Calu3 (cell line): ENCODE measurements at regions of chr6 and their contacts with region 1.

Region 1: DNA sequence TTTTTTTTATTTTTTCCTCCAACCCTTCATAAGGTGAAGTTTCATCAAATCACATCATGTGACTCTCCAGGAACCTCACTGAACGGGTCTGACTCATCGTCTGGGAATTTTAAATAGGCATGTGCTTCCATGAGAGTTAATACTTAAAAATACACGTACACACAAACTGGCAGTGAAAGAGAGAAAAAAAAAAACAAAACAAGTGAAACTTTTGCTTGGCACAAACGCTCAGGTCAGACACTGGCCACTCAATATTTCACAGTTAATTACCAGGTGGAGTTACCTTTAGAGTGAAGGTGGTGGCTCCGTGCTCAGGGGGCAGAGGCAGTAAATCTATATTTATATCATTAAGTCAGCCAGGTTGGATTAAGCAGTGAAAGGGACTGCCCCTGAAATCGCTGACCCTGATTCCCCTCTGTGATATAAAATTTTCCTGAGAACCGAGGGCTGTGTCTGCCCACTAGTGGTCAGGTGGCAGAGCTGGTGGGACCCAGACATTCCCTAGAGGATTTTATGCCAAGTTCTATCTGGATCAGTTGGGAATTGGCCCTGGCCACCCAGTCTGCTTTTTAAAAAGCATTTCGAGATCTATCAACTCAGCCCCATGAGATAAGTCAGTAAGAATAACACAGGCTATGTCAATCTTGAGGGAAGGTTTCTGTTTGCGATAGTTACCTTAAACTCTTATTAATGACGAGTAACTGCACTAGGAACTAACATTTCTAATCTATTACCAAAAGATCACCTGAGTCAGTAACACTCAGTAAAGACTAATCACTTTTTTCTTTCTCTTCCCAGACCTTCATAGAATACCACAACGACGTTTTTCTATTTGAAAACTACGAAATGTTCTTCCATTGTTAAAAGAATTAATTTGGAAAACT is 259.1 kb downstream of the HDGFL1 start:
- DNase-seq: peak; percentile 88
- H3K4me3 Mint-ChIP-seq: peak overlapping the region; percentile 48
- H3K27ac Mint-ChIP-seq: peak overlapping the region; percentile 82
- H3K4me1 Mint-ChIP-seq: peaks cover 68% of the 10 kb centered on the region
- H3K27me3 Mint-ChIP-seq: no peaks in the 10 kb centered on the region
- CTCF ChIP-seq: peak; percentile 95

Region 2: DNA sequence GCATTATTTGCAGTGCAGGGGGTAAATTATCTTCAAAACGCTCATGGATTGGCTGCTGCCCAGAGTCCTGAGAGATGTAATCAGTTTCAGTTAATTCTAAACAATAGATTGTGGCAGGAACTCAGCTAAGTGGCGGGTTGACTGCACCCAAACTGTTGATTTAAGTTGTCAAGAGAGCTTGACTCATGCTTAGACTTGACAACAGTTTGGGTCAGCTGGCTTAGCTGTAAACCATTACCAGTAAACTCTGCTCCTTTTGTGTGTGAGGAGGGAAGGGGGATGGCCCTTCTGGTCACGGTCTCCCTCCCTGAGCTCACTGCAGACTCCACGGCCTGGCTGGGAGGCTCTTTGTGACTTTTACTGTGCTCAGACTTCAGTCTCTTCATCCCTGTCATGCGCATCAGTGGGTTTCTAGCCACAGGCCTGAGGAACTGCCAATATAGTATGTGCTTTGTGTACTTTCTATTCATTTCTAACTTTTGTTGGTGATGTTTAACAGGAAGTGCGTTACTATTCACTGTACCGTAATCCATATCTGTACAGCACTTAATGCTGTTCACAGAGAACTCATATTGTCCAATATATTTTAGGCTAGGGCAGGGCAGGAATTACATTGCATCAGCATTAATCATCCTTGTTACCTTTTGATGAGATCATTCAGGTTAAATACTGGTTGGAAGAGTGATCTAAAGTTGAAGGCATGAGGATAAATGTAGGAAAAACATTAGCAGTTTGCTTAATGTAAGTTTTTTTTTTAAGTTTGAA is 1805.9 kb before region 1 on chr6:
- CTCF ChIA-PET with region 1: no interaction called
- intact Hi-C with region 1: loop called (anchors 5 kb)
- DNase-seq: peak; percentile 91
- H3K4me3 Mint-ChIP-seq: peak overlapping the region; percentile 53
- H3K27ac Mint-ChIP-seq: peak overlapping the region; percentile 97
- H3K4me1 Mint-ChIP-seq: peaks cover 65% of the 10 kb centered on the region
- H3K27me3 Mint-ChIP-seq: no peaks in the 10 kb centered on the region
- CTCF ChIP-seq: no peak

Region 3: DNA sequence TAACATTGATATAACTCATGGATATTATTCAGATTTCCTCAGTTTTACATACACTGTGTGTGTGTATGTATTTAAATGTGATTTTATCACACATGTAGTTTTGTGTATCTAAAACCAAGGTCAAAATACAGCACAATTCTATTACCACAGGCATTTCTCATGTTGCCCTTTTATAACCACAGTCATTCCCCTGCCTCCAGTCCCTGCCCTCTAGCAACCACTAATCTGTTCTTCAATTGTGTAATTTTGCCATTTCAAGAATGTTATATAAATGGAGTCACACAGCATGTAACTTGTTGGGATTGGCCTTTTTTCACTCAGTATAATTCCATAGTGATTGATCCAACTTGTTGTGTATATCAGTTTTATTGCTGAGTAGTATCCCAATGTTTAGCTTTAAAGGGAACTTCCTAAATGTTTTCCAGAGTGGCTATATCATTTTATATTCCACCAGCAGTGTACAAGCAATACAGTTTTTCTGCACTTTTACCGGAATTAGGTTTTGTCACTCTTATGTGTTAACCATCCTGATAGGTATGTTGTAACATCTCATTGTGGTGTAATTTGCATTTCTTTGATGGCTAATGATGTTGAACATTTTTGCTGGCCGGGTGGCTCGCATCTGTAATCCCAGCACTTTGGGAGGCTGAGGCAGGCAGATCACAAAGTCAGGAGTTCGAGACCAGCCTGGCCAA is 896.6 kb before region 1 on chr6:
- CTCF ChIA-PET with region 1: no interaction called
- intact Hi-C with region 1: loop called (anchors 2 kb)
- DNase-seq: no peak
- H3K4me3 Mint-ChIP-seq: no peak overlapping the region
- H3K27ac Mint-ChIP-seq: no peak overlapping the region
- H3K4me1 Mint-ChIP-seq: peaks cover 42% of the 10 kb centered on the region
- H3K27me3 Mint-ChIP-seq: no peaks in the 10 kb centered on the region
- CTCF ChIP-seq: no peak

Region 4: GRCh38 chr6:22113026-22113766 is 715.2 kb before region 1 on chr6:
- CTCF ChIA-PET with region 1: interaction called, 3 read pairs
- intact Hi-C with region 1: loop called (anchors 1 kb)
- DNase-seq: peak; percentile 45
- H3K4me3 Mint-ChIP-seq: no peak overlapping the region
- H3K27ac Mint-ChIP-seq: peak overlapping the region; percentile 83
- H3K4me1 Mint-ChIP-seq: peaks cover 12% of the 10 kb centered on the region
- H3K27me3 Mint-ChIP-seq: no peaks in the 10 kb centered on the region
- CTCF ChIP-seq: no peak

Region 5: DNA sequence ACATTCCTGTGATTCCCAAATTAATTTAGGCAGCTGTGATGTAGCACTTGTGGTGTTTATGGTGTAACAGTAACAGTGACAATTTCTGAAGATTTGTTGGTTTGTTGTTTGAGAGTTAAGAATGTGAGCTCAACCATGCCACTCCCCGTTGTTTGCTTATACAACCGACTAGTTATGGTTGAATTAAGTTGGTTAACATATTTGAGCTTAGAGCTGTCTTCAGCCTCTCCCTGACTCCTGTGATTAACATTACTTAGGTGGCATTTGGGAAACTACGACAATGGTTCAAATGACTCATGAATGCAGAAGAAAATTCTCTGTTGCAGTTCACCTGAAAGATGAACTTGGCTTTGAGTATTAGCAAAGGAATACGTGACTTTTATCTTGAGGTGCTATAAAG is 495.7 kb before region 1 on chr6:
- CTCF ChIA-PET with region 1: no interaction called
- intact Hi-C with region 1: loop called (anchors 10 kb)
- DNase-seq: no peak
- H3K4me3 Mint-ChIP-seq: no peak overlapping the region
- H3K27ac Mint-ChIP-seq: no peak overlapping the region
- H3K4me1 Mint-ChIP-seq: no peaks in the 10 kb centered on the region
- H3K27me3 Mint-ChIP-seq: no peaks in the 10 kb centered on the region
- CTCF ChIP-seq: no peak

Region 6: DNA sequence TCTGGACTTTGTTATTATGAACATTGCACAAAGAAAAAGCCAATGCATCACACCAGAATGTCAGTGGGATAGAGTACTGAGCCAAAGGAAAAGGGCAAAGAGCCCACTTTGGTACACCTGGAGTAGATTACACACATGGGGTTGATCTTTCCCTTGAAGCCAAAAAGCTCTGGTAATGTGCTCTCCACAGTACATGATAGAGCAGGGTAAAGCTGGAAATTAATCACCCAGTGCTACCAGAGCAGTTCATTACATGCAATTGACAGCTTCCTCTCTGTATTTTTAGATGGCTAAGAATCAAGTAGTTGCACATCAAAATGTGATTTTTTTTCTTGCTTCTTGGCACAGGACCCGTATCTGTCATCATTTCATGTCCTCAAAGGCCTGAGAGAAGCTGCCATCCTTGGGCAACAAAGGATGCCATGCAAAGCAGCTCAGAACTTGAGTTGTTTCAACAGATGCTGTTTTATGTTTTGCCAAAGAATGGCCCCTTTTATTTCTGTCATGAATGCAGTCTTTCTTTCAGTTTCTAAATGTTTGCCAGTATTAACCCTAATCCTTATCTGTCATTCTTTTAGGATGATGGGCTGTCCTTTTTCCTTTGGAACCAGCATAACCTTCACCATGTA is 171.0 kb before region 1 on chr6:
- CTCF ChIA-PET with region 1: no interaction called
- intact Hi-C with region 1: loop called (anchors 2 kb)
- DNase-seq: peak; percentile 28
- H3K4me3 Mint-ChIP-seq: no peak overlapping the region
- H3K27ac Mint-ChIP-seq: peak overlapping the region; percentile 25
- H3K4me1 Mint-ChIP-seq: peaks cover 50% of the 10 kb centered on the region
- H3K27me3 Mint-ChIP-seq: no peaks in the 10 kb centered on the region
- CTCF ChIP-seq: no peak

Region 7: DNA sequence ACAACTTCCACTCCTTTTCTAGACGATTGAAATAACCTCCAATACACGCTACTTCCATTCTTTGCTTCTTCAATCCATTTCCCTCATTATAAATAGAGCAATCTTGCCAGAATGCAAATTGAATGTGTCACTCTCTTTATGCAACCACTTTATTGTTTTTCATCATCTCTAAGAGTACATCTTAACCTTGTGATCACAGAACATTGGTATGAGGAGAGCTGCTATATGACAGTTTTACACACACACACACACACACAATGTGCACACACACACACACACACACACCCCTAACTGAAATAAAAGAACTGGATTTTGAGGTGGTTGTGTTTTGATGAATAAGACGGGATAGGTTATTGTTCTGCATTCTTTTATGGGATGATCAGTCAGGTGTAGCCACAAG is 72.1 kb before region 1 on chr6:
- CTCF ChIA-PET with region 1: no interaction called
- intact Hi-C with region 1: no loop called
- DNase-seq: no peak
- H3K4me3 Mint-ChIP-seq: no peak overlapping the region
- H3K27ac Mint-ChIP-seq: no peak overlapping the region
- H3K4me1 Mint-ChIP-seq: no peaks in the 10 kb centered on the region
- H3K27me3 Mint-ChIP-seq: no peaks in the 10 kb centered on the region
- CTCF ChIP-seq: no peak

Region 8: GRCh38 chr6:23446394-23447046 is 618.1 kb after region 1 on chr6:
- CTCF ChIA-PET with region 1: no interaction called
- intact Hi-C with region 1: loop called (anchors 5 kb)
- DNase-seq: peak; percentile 23
- H3K4me3 Mint-ChIP-seq: no peak overlapping the region
- H3K27ac Mint-ChIP-seq: no peak overlapping the region
- H3K4me1 Mint-ChIP-seq: no peaks in the 10 kb centered on the region
- H3K27me3 Mint-ChIP-seq: no peaks in the 10 kb centered on the region
- CTCF ChIP-seq: no peak